RWPE1 (cell line): ENCODE measurements at regions of chr17 and their contacts with region 1.

Region 1: GRCh38 chr17:43418441-43419374 is 19.9 kb downstream of the ARL4D start:
- DNase-seq: peak; percentile 93
- H3K27ac ChIP-seq: peak overlapping the region; percentile 100
- CTCF ChIP-seq: no peak; the same call in 1 of the 2 replicates

Region 2: DNA sequence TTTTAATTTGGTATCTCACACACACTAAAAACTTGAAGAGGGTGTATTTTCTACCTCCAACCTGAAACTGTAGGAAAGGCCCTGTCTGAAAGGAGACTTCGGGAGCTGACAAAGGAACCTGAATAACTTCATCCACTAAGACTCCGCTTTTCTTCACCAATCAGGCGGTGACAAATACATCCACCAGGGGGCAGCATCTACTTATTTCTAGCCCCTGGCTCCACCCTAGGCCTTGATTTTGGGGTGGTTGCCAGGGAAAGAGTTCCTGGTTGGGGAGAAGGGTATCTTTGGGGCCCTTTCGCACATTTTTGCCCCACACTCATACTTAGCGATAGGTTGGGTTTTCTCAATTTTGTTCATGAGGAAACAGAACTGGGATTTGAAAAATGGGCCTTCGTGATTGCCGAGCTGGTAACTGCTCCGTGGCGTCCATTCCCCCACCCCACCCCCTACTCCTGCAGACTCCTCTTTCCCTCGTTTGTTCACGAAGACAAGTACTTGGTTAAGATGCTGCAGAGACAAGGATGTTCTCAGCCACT is 24.7 kb before region 1 on chr17:
- CTCF ChIA-PET with region 1: interaction called, 24 read pairs
- POLR2A ChIA-PET with region 1: interaction called, 7 read pairs
- DNase-seq: peak; percentile 89
- H3K27ac ChIP-seq: peak overlapping the region; percentile 63
- CTCF ChIP-seq: peak; percentile 84

Region 3: GRCh38 chr17:43400943-43401692 is 17.6 kb before region 1 on chr17:
- CTCF ChIA-PET with region 1: interaction called, 3 read pairs
- POLR2A ChIA-PET with region 1: interaction called, 15 read pairs
- DNase-seq: peak; percentile 88
- H3K27ac ChIP-seq: peak overlapping the region; percentile 90
- CTCF ChIP-seq: no peak